ENCODE measurements at regions of chr9 and their contacts with region 1.

Region 1: DNA sequence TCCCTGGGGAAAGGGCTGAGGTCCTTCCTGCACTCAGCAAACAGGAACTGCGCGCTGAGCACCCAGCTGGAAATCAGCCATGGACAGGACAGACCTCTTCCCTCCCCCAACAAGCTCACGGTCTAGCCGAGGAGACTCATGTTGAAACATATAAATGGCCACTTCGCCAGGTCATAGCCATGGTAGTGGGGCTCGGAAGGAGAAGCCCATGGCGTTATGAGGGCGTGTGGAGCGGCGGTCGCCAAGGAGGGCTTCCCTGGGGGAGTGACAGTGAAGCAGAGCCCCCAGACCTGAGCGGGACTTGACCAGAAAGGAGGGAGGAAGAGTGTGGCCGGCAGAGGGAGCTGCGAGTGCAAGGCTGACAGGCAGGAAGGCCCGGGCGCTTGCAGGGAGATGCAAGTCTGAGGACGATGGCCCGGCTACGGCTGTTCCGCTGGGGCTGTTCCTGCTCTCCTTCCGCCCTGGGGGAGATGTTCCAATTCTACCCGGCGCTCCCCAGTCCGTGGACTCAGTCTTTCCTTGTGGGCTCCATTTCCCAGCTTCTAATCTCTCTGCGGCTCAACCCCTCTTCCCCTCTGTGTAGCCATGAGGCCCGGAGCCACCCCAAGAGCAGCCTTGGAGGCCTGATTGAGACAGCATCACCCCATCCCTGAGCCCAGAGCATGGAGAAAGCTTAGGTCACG is 43.9 kb upstream of the PRRC2B start:
- DNase-seq: peak; percentile 85 to 92 (median 89)
- H3K4me3 ChIP-seq: no peak overlapping the region
- H3K27ac ChIP-seq: no peak overlapping the region
- H3K4me1 ChIP-seq: no peaks in the 10 kb centered on the region
- H3K27me3 ChIP-seq: no peaks in the 10 kb centered on the region
- CTCF ChIP-seq: peak; percentile 76 to 87 (median 80)
- EP300 ChIP-seq: no peak
- POLR2A ChIP-seq: no peak

Region 2: DNA sequence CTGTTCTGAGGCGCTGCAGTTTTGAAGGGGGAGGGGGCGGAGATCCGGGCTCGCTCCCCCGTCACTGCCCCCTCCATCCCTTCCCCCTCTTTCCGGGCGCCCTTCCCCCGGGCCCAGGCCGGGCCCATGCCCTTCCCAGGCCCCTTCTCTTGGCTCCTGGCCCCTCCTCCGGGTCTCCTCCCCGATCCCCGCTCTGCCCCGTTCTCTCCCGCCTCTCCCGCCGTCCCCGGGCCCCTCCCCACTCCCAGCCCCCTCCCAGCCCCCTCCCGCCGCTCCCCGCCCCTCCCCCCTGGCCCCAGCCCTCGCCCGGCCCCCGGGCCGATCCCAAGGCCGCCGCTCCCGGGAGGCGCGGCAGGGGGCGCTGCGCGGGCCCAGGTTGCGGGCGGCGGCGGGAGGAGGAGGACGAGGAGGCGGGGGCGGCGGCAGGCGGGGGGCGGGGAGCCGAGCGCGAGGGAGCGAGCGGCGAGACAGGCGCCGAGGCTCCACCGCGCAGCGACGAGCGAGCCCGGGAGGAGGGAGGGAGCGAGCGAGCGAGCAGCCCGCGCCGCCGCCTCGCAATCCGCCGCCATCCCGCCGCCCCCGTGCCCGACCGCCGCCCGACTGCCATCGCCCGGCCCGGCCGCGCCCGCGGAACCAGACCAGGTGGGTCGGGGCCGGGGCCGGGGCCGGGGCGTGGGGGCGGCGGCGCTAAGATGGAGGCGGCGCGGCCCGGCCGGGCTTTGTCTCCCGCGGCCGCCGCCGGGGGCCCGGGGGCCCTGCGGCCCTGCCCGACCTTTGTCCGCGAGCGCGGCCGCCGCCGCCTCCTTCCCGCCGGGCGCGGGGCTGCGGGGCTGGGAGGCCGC is 43.8 kb after region 1 on chr9 and contains the start of gene PRRC2B:
- intact Hi-C with region 1: no loop called
- DNase-seq: peak; percentile 86 to 92 (median 89)
- H3K4me3 ChIP-seq: peak within 1 kb of the TSS; percentile 45
- H3K27ac ChIP-seq: peak within 1 kb of the TSS; percentile 98
- H3K4me1 ChIP-seq: peaks cover 19% of the 10 kb centered on the region
- H3K27me3 ChIP-seq: no peaks in the 10 kb centered on the region
- CTCF ChIP-seq: peak in 1 of 3 donors; percentile 31
- EP300 ChIP-seq: no peak
- POLR2A ChIP-seq: peak; percentile 55
- total RNA-seq, gene PRRC2B: 97.6 to 319 (median 244) TPM

Region 3: DNA sequence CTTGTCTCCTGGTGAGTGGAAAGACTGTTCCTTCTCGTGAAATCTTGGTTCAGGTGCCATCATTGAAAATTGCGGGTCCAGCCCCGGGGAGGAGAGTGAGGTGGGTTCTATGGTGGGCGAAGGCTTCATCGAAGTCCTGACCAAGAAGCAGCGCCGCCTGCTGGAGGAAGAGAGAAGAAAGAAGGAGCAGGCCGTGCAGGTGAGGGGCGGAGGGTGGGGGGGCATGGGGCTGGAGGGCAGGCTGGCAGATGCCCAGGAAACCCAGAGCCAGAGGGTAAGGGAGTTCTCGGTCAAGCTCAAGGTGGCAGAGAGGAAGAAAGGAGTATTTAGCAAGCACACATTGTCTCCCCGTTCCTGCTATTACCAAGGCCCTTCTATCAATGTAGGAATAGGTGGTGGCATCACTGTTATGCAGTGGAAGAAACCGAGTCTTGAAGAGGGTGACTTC is 128.4 kb after region 1 on chr9:
- intact Hi-C with region 1: loop called in 3 of 4 experiments (anchors 5 to 10 kb)
- DNase-seq: peak; percentile 40 to 69 (median 61)
- H3K4me3 ChIP-seq: no peak overlapping the region
- H3K27ac ChIP-seq: no peak overlapping the region
- H3K4me1 ChIP-seq: no peaks in the 10 kb centered on the region
- H3K27me3 ChIP-seq: no peaks in the 10 kb centered on the region
- CTCF ChIP-seq: peak; percentile 24 to 32 (median 24)
- EP300 ChIP-seq: no peak
- POLR2A ChIP-seq: no peak

Measured in ovary (tissue), 10 donors.